ENCODE measurements at regions of chr1 and their contacts with region 1.

Region 1: DNA sequence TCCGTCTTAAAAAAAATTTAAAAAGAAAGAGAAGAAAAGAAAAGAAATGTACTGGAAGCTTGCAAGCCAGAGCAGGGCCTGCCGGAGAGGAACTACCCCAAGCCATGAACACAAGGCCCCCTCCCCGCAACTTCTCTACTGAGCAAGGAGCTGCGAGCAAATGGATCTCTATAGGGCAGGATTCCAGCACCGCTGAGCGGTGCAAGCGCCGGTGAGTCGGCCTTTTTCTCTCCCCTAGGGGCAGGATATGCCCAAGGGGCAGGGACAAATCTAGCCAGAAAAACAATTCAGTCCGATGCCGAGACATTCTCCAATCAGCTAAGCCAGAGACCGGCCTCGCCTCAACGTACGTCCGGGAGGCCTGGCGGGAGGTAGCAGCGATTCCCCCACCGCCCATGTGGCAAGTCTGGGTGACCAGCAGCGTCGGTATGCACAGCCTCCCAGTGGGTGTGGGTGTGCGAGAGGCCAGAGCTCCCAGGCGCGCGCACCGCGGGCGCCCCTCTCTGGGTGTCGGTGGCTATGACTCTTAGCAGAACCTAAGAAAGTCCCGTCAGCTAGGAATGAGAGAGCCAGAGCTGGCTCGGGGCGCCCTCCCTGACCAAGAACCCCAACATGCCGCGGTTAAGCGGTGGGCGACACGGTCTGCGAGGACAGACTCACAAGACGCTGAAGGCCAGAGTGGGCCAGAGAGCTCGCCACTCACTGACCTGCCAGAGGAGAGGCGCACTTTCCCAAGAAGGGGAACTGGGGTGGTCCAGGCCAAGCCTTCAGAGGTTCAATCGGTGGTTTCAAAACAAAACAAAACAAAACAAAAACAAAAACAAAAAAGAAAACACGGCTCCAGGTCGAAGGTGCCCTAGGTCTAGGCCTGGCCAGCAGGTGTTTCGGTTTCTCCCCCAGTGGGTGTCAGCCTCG is 1.9 kb downstream of the CSMD2 start:
- DNase-seq: peak; percentile 77
- ATAC-seq: peak; percentile 94

Region 2: GRCh38 chr1:33735621-33736020 is 427.5 kb before region 1 on chr1:
- intact Hi-C with region 1: loop called (anchors 10 kb)
- DNase-seq: no peak
- ATAC-seq: no peak

Region 3: GRCh38 chr1:34089731-34090130 is 73.4 kb before region 1 on chr1:
- intact Hi-C with region 1: no loop called
- DNase-seq: no peak
- ATAC-seq: no peak